Activated CD4-positive, alpha-beta T cell treated with anti-CD3 and anti-CD28 coated beads, Interleukin-2, amount 10 ng/mL, durations not matched to agents 7 days and 5 days (primary cell): ENCODE measurements at regions of chr7 and their contacts with region 1.

Region 1: DNA sequence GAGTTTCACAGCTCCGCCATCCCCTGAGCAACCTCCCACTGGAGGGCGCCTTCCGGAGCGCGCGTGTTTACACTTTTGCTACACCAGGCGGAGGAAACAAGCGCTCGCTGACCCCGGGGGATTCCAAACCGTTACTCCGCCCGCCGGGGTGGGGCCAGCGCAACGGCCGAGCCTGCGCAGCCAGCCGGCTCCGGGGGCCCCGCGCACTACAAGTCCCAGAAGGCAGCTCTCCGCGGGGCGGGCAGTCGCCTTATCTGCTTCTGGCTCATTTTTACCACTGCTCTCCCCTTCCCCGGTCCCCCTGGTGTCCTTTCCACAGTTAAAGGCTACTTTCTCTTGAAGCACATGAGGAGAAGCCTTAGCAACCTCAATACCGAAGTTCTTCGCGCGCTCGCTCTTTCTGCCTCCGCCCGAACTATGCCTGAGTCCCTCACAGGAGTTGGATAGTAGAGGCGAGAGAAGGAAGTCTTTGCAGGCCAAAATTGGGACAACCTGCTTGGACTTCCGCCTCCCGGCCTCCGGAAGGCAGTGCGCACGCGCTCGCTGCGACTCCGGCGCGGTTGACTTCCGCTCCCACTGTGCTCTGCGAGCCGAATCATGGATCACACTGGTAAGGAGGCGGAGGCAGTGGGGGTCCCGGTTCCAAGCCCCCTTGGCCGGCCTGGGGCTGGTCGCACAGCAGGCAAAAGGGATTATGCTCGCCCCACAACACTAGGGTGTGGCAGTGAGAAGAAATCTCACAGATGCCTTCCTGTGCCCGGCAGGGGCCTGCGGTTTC is at the start of gene CBLL1:
- DNase-seq: peak; percentile 98
- H3K4me3 Mint-ChIP-seq: peak within 1 kb of the TSS; percentile 87
- H3K27ac Mint-ChIP-seq: peak within 1 kb of the TSS; percentile 99
- H3K4me1 Mint-ChIP-seq: peaks cover 48% of the 10 kb centered on the region
- H3K27me3 Mint-ChIP-seq: no peaks in the 10 kb centered on the region
- total RNA-seq, gene CBLL1: 45.7 to 59.7 TPM

Region 2: GRCh38 chr7:107168233-107169119 is 575.3 kb before region 1 on chr7 and contains the start of gene HBP1:
- CTCF ChIA-PET with region 1: interaction called, 8 read pairs
- POLR2A ChIA-PET with region 1: interaction called, 10 read pairs
- DNase-seq: peak; percentile 99
- H3K4me3 Mint-ChIP-seq: peak within 1 kb of the TSS; percentile 95
- H3K27ac Mint-ChIP-seq: peak within 1 kb of the TSS; percentile 99
- H3K4me1 Mint-ChIP-seq: peaks cover 38% of the 10 kb centered on the region
- H3K27me3 Mint-ChIP-seq: peaks cover 7% of the 10 kb centered on the region
- total RNA-seq, gene HBP1: 34.4 to 34.8 TPM

Region 3: GRCh38 chr7:107879400-107880035 is 135.8 kb after region 1 on chr7:
- CTCF ChIA-PET with region 1: interaction called, 35 read pairs
- POLR2A ChIA-PET with region 1: no interaction called
- DNase-seq: peak; percentile 40
- H3K4me3 Mint-ChIP-seq: no peak overlapping the region
- H3K27ac Mint-ChIP-seq: no peak overlapping the region
- H3K4me1 Mint-ChIP-seq: peaks cover 29% of the 10 kb centered on the region
- H3K27me3 Mint-ChIP-seq: no peaks in the 10 kb centered on the region